ENCODE measurements at regions of chr12 and their contacts with region 1.

Region 1: GRCh38 chr12:113647048-113647447 is 175.4 kb upstream of the LHX5 start:
- DNase-seq: no peak
- H3K4me3 ChIP-seq: no peak overlapping the region
- H3K27ac ChIP-seq: no peak overlapping the region
- H3K4me1 ChIP-seq: no peaks in the 10 kb centered on the region
- H3K27me3 ChIP-seq: no peaks in the 10 kb centered on the region
- CTCF ChIP-seq: peak in 1 of 2 donors; percentile 13

Region 2: GRCh38 chr12:113551563-113551962 is 95.5 kb before region 1 on chr12:
- CTCF ChIA-PET with region 1: no interaction called
- dilution Hi-C with region 1: loop called (anchors 5 kb)
- in situ Hi-C with region 1: no loop called
- intact Hi-C with region 1: no loop called
- DNase-seq: no peak
- H3K4me3 ChIP-seq: no peak overlapping the region
- H3K27ac ChIP-seq: no peak overlapping the region
- H3K4me1 ChIP-seq: no peaks in the 10 kb centered on the region
- H3K27me3 ChIP-seq: no peaks in the 10 kb centered on the region
- CTCF ChIP-seq: no peak

Measured in mammary epithelial cell (primary cell).